ENCODE measurements at regions of chr4 and their contacts with region 1.

Region 1: DNA sequence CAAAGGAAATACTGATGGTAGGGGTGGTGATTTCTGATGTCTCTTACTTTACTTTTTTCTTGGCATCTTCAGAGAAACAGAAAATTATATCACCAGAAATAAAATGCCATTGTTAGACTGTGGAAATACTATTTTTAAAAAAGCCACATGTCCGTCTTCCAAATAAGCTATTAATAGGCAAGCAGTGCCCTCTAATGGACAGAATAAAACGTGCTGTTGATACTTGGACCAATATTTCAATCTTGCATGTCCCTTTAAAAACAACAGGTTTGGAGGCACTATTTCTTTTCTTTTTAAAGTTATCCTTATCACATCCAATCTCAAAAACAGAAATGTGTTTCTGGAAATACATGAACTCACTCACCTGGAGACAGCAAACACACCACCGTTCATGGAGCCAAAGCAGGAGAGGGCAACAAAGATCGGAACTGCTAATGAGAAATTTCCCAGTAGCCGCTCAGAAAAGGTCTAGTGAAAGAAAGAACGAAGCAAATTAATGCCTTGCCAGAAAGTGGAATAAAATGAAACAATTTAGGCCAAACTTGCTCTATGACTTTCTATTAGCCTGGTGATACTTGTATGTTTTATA is 59.2 kb downstream of the SLC7A11 start:
- DNase-seq: no peak
- ATAC-seq: peak; percentile 61
- H3K4me3 ChIP-seq: no peak overlapping the region
- H3K27ac ChIP-seq: no peak overlapping the region
- H3K4me1 ChIP-seq: no peaks in the 10 kb centered on the region
- H3K27me3 ChIP-seq: no peaks in the 10 kb centered on the region
- CTCF ChIP-seq: peak; percentile 35 to 67 (median 59); a peak in 5 of 6 replicates
- EP300 ChIP-seq: no peak
- POLR2A ChIP-seq: no peak
- RAD21 ChIP-seq: peak; percentile 84

Region 2: GRCh38 chr4:137819964-137820383 is 363.0 kb before region 1 on chr4:
- CTCF ChIA-PET with region 1: interaction called, 4 read pairs
- POLR2A ChIA-PET with region 1: no interaction called
- RAD21 ChIA-PET with region 1: interaction called, 6 read pairs
- SMC1A ChIA-PET with region 1: interaction called, 5 read pairs
- in situ Hi-C with region 1: no loop called
- intact Hi-C with region 1: loop called (anchors 2 kb)
- DNase-seq: peak; percentile 1
- ATAC-seq: peak; percentile 97
- H3K4me3 ChIP-seq: no peak overlapping the region
- H3K27ac ChIP-seq: no peak overlapping the region
- H3K4me1 ChIP-seq: no peaks in the 10 kb centered on the region
- H3K27me3 ChIP-seq: no peaks in the 10 kb centered on the region
- CTCF ChIP-seq: peak; percentile 62 to 77 (median 66)
- EP300 ChIP-seq: no peak
- POLR2A ChIP-seq: no peak
- RAD21 ChIP-seq: peak; percentile 89

Region 3: GRCh38 chr4:138162259-138162658 is 20.7 kb before region 1 on chr4:
- CTCF ChIA-PET with region 1: interaction called, 12 read pairs
- POLR2A ChIA-PET with region 1: no interaction called
- RAD21 ChIA-PET with region 1: interaction called, 3 read pairs
- SMC1A ChIA-PET with region 1: interaction called, 6 read pairs
- in situ Hi-C with region 1: no loop called
- intact Hi-C with region 1: no loop called
- DNase-seq: no peak
- ATAC-seq: no peak
- H3K4me3 ChIP-seq: no peak overlapping the region
- H3K27ac ChIP-seq: no peak overlapping the region
- H3K4me1 ChIP-seq: no peaks in the 10 kb centered on the region
- H3K27me3 ChIP-seq: no peaks in the 10 kb centered on the region
- CTCF ChIP-seq: no peak
- EP300 ChIP-seq: no peak
- POLR2A ChIP-seq: no peak
- RAD21 ChIP-seq: no peak

Region 4: GRCh38 chr4:138230048-138230447 is 47.1 kb after region 1 on chr4:
- CTCF ChIA-PET with region 1: interaction called, 7 read pairs
- POLR2A ChIA-PET with region 1: interaction called, 3 read pairs
- RAD21 ChIA-PET with region 1: interaction called, 3 read pairs
- SMC1A ChIA-PET with region 1: interaction called, 10 read pairs
- in situ Hi-C with region 1: no loop called
- intact Hi-C with region 1: no loop called
- DNase-seq: no peak
- ATAC-seq: peak; percentile 44
- H3K4me3 ChIP-seq: no peak overlapping the region
- H3K27ac ChIP-seq: no peak overlapping the region
- H3K4me1 ChIP-seq: no peaks in the 10 kb centered on the region
- H3K27me3 ChIP-seq: no peaks in the 10 kb centered on the region
- CTCF ChIP-seq: no peak
- EP300 ChIP-seq: no peak
- POLR2A ChIP-seq: no peak
- RAD21 ChIP-seq: no peak

Region 5: GRCh38 chr4:138301531-138301930 is 118.6 kb after region 1 on chr4:
- CTCF ChIA-PET with region 1: no interaction called
- POLR2A ChIA-PET with region 1: no interaction called
- RAD21 ChIA-PET with region 1: no interaction called
- SMC1A ChIA-PET with region 1: no interaction called
- in situ Hi-C with region 1: no loop called
- intact Hi-C with region 1: no loop called
- DNase-seq: no peak
- ATAC-seq: no peak
- H3K4me3 ChIP-seq: no peak overlapping the region
- H3K27ac ChIP-seq: no peak overlapping the region
- H3K4me1 ChIP-seq: no peaks in the 10 kb centered on the region
- H3K27me3 ChIP-seq: no peaks in the 10 kb centered on the region
- CTCF ChIP-seq: no peak
- EP300 ChIP-seq: no peak
- POLR2A ChIP-seq: no peak
- RAD21 ChIP-seq: no peak

Region 6: DNA sequence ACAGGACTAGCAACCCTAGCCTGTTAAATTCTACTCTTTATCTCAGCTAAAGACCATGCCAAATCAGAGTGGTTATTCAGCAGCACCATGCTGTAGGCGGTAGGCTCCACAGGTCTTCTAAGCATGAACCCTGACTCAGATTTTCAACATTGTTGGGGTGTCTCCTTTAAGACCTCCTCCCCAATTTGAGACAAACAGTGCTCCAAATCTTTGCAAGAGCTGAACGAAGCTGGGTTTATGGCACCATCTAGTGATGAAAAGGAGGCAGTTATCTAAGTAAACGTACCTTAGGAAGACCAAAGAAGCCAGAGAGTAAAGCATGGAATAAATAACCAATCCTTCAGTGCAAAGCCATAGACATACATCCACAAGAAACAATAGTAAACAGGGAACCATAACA is 393.8 kb after region 1 on chr4:
- CTCF ChIA-PET with region 1: interaction called, 4 read pairs
- POLR2A ChIA-PET with region 1: no interaction called
- RAD21 ChIA-PET with region 1: no interaction called
- SMC1A ChIA-PET with region 1: interaction called, 3 read pairs
- in situ Hi-C with region 1: no loop called
- intact Hi-C with region 1: loop called (anchors 10 kb)
- DNase-seq: no peak
- ATAC-seq: peak; percentile 71
- H3K4me3 ChIP-seq: no peak overlapping the region
- H3K27ac ChIP-seq: no peak overlapping the region
- H3K4me1 ChIP-seq: no peaks in the 10 kb centered on the region
- H3K27me3 ChIP-seq: no peaks in the 10 kb centered on the region
- CTCF ChIP-seq: peak in 2 of 3 experiments; percentile 34 to 41; a peak in 4 of 6 replicates
- EP300 ChIP-seq: no peak
- POLR2A ChIP-seq: no peak
- RAD21 ChIP-seq: peak; percentile 60